ENCODE measurements at regions of chr22 and their contacts with region 1.

Region 1: DNA sequence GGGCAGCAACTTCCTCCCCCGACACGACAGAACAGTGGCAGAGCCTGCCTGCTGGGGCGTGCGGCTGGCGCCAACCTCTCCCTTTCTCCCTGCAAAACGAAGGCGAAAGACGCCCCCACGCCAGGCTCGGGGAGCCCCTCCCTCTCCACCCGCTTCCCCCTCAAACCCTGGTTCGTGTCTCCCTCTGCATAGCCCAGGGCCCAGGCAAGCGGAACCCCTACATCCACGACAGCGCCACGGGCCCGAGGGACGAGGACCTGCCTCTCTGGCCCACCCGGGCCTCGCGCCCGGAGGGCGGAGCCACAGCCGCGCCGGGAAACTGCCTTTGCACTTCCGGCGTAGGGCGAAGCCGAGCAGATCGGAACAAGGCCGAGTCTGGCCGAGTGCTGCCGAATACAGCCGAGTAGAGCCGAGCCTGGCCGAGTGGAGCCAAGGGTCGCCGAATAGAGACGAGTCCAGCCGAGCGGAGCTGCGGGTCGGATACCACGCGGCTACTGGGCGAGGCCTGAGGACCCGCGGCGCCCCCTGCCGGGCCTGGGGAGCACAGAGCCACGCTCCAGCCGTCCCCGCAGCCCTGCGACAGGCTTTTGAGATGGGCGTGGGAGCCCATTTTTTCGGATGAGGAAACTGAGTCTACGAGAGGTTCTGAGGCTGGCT is 11.2 kb upstream of the C1QTNF6 start:
- DNase-seq: peak; percentile 96
- ATAC-seq: peak; percentile 98
- H3K4me3 ChIP-seq: peak overlapping the region; percentile 58
- H3K27ac ChIP-seq: peak overlapping the region; percentile 84
- H3K4me1 ChIP-seq: peaks cover 20% of the 10 kb centered on the region
- H3K27me3 ChIP-seq: no peaks in the 10 kb centered on the region
- CTCF ChIP-seq: peak; percentile 95
- POLR2A ChIP-seq: peak; percentile 72; the same call in 1 of the 2 replicates
- RAD21 ChIP-seq: peak; percentile 74

Region 2: DNA sequence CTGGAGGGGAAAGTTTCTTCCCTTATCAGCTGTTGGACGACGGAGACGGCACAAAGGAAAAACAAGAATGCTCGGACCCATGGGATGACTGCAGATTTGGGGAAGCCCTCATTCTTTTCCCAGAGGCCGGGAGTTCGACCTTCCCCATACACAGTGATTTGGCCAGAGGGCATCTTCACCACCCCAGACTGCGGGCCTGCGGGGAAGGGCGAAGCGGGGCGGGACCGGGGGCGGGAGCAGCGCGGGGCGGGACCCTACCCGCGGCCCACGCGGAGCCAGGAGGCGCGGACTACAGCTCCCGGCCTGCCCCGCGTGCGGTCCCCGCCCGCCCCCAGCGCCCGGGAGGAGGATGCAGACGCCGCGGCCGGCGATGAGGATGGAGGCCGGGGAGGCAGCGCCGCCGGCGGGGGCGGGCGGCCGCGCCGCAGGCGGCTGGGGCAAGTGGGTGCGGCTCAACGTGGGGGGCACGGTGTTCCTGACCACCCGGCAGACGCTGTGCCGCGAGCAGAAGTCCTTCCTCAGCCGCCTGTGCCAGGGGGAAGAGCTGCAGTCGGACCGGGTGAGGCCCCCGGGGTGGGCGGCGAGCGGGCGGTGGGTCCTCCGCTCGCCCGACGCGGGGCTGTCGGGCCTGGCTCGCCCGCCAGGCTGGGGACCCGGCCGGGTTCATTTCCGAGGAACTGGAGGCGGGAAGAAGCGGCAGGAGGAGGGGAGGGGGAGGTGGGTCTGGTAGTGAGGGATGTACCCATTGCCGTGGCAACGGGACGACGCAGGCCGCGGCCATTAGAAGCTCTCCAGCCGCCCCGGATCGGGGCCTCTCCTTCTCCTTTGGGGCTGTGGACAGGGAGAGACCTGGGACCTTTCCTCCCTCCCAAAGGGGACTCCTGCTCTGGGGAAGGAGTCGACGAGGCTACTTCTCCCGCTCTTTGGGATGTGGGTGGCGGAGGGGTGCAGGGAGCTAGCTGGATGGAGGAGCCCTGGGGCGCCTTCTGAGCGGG is 147.5 kb before region 1 on chr22 and contains the start of gene KCTD17:
- CTCF ChIA-PET with region 1: no interaction called
- POLR2A ChIA-PET with region 1: no interaction called
- dilution Hi-C with region 1: no loop called
- in situ Hi-C with region 1: no loop called
- intact Hi-C with region 1: loop called (anchors 5 kb)
- DNase-seq: peak; percentile 59
- ATAC-seq: peak; percentile 99
- H3K4me3 ChIP-seq: peak within 1 kb of the TSS; percentile 89
- H3K27ac ChIP-seq: peak within 1 kb of the TSS; percentile 44; the same call in 1 of the 2 replicates
- H3K4me1 ChIP-seq: peaks cover 4% of the 10 kb centered on the region; the same call in 1 of the 2 replicates
- H3K27me3 ChIP-seq: 0 out of 2 replicates have a peak, but pooled peaks cover 2% of the 10 kb centered on the region
- CTCF ChIP-seq: 0 out of 2 replicates have a peak, but pooled peaks have one; percentile 9
- POLR2A ChIP-seq: peak; percentile 74
- RAD21 ChIP-seq: no peak
- total RNA-seq, gene KCTD17: 28.3 and 29.2 TPM in 2 replicates

Region 3: DNA sequence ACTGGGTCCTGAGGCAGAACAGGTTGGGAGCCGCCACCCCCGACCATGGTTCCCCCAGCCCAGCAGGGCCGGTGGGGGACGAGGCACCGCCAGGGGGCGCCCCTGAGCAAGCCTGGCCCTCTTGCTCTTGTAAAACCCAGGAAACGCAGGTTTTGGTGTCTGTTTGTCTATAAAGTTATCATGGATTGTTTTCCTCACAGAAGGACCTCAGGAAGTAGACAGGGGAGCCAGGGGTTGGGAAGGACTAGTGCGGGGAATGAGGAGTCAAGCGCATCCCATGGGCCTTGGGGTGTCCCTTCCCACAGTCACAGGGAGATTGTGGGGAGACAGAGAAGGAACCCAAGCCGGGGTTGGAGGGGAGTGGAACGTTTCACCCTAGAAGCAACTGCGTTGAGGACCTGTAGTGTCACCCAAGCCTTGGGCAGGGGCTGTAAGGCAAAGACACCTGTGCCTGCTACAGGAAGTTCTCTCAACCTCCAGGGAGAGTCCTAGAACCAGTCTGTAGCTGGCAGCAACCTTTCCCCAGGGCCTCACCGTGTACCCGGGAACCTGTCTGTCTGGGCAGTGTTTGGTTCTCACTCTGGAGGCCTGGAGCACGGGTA is 121.2 kb before region 1 on chr22:
- CTCF ChIA-PET with region 1: no interaction called
- POLR2A ChIA-PET with region 1: no interaction called
- dilution Hi-C with region 1: no loop called
- in situ Hi-C with region 1: no loop called
- intact Hi-C with region 1: loop called (anchors 1 kb)
- DNase-seq: peak; percentile 37
- ATAC-seq: peak; percentile 86
- H3K4me3 ChIP-seq: no peak overlapping the region
- H3K27ac ChIP-seq: no peak overlapping the region
- H3K4me1 ChIP-seq: no peaks in the 10 kb centered on the region
- H3K27me3 ChIP-seq: peaks cover 42% of the 10 kb centered on the region
- CTCF ChIP-seq: peak; percentile 81
- POLR2A ChIP-seq: no peak
- RAD21 ChIP-seq: peak; percentile 70

Region 4: GRCh38 chr22:37166675-37167066 is 32.6 kb before region 1 on chr22:
- CTCF ChIA-PET with region 1: interaction called, 5 read pairs
- POLR2A ChIA-PET with region 1: no interaction called
- dilution Hi-C with region 1: no loop called
- in situ Hi-C with region 1: loop called (anchors 5 kb)
- intact Hi-C with region 1: loop called (anchors 1 kb)
- DNase-seq: peak; percentile 65
- ATAC-seq: peak; percentile 96
- H3K4me3 ChIP-seq: no peak overlapping the region
- H3K27ac ChIP-seq: no peak overlapping the region
- H3K4me1 ChIP-seq: no peaks in the 10 kb centered on the region; the same call in 1 of the 2 replicates
- H3K27me3 ChIP-seq: peaks cover 22% of the 10 kb centered on the region
- CTCF ChIP-seq: peak; percentile 94
- POLR2A ChIP-seq: no peak
- RAD21 ChIP-seq: peak; percentile 83

Measured in IMR-90 (cell line).